CD4-positive, alpha-beta T cell (primary cell): ENCODE measurements at regions of chr14 and their contacts with region 1.

Region 1: DNA sequence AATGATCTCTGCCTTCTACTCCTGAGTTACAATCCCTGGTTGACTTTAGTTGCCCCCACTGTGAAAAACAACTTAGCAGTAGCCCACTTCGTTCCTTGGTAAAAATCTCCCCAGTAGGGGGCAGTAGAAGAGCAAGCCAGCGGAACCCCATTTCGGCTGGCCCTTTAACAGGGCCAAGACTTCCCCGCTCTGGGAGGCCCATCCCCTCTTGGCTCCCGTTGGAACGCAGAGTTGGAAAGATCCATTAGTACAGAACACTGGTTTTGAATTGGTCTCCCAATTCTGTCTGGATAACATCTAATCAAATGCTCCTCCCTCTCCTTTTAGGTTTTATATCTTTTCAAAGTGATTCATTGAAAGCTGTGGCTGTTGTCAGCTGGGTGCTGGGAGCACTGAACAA is 1133.3 kb downstream of the BCL11B start:
- DNase-seq: peak; percentile 48 to 88 (median 64)
- ATAC-seq: peak; percentile 47
- H3K4me3 ChIP-seq: peak overlapping the region; percentile 41
- H3K4me3 Mint-ChIP-seq: peak overlapping the region; percentile 80
- H3K27ac ChIP-seq: peak overlapping the region; percentile 56 to 71
- H3K27ac Mint-ChIP-seq: peak overlapping the region; percentile 92
- H3K4me1 ChIP-seq: peaks cover 65% of the 10 kb centered on the region
- H3K4me1 Mint-ChIP-seq: peaks cover 99% of the 10 kb centered on the region
- H3K27me3 ChIP-seq: no peaks in the 10 kb centered on the region
- H3K27me3 Mint-ChIP-seq: no peaks in the 10 kb centered on the region
- CTCF ChIP-seq: peak; percentile 94

Region 2: DNA sequence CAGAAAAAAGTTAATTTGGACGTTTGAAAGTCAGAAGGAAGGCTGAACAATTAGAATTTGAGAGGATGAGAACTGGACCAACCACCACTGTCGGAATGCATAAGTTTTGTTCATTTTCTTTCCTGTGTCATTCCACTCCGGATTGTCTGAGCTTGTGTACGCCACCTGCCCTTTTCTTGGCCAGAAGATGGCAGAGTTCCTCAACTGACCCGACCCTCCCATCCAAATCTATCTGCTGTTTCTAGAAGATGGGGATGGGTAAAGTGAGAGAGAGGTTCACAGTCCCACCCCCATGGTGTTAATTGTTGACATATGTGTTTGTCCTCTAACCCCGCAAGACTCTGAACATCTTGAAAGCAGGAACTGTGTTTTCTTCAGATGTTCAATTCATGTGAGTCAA is 953.5 kb before region 1 on chr14:
- CTCF ChIA-PET with region 1: interaction called, 3 read pairs
- POLR2A ChIA-PET with region 1: no interaction called
- intact Hi-C with region 1: loop called in 1 of 2 experiments (anchors 10 kb)
- DNase-seq: peak in 9 of 14 experiments; percentile 8 to 60 (median 24)
- ATAC-seq: no peak
- H3K4me3 ChIP-seq: no peak overlapping the region
- H3K4me3 Mint-ChIP-seq: no peak overlapping the region
- H3K27ac ChIP-seq: no peak overlapping the region
- H3K27ac Mint-ChIP-seq: no peak overlapping the region
- H3K4me1 ChIP-seq: peaks cover 5% of the 10 kb centered on the region
- H3K4me1 Mint-ChIP-seq: peaks cover 7% of the 10 kb centered on the region
- H3K27me3 ChIP-seq: no peaks in the 10 kb centered on the region
- H3K27me3 Mint-ChIP-seq: no peaks in the 10 kb centered on the region
- CTCF ChIP-seq: peak; percentile 54

Region 3: GRCh38 chr14:97523697-97524315 is 614.9 kb before region 1 on chr14:
- CTCF ChIA-PET with region 1: no interaction called
- POLR2A ChIA-PET with region 1: no interaction called
- intact Hi-C with region 1: no loop called
- DNase-seq: no peak
- ATAC-seq: no peak
- H3K4me3 ChIP-seq: no peak overlapping the region
- H3K4me3 Mint-ChIP-seq: no peak overlapping the region
- H3K27ac ChIP-seq: no peak overlapping the region
- H3K27ac Mint-ChIP-seq: no peak overlapping the region
- H3K4me1 ChIP-seq: peaks cover 6% of the 10 kb centered on the region
- H3K4me1 Mint-ChIP-seq: peaks cover 8% of the 10 kb centered on the region
- H3K27me3 ChIP-seq: no peaks in the 10 kb centered on the region
- H3K27me3 Mint-ChIP-seq: no peaks in the 10 kb centered on the region
- CTCF ChIP-seq: no peak

Region 4: DNA sequence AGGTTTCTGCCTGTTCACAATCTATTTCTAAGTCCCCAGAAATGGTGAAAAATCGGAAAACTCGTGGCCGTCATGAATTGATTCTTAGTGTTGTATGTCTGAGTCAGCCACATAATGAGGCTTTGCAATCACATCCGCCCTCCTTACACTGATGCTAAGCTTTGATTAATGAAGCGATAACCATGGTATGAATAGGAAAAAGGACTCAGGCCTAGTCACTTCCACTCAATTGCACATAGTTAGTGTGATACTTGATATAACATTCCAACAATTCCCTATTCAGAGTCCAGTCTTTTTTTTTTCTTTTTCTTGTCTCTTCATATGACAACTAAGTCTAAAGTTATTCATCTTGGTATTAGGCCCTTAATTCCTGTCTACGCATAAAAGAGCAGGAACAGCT is 110.5 kb before region 1 on chr14:
- CTCF ChIA-PET with region 1: no interaction called
- POLR2A ChIA-PET with region 1: no interaction called
- intact Hi-C with region 1: no loop called
- DNase-seq: no peak
- ATAC-seq: no peak
- H3K4me3 ChIP-seq: no peak overlapping the region
- H3K4me3 Mint-ChIP-seq: no peak overlapping the region
- H3K27ac ChIP-seq: no peak overlapping the region
- H3K27ac Mint-ChIP-seq: no peak overlapping the region
- H3K4me1 ChIP-seq: no peaks in the 10 kb centered on the region
- H3K4me1 Mint-ChIP-seq: no peaks in the 10 kb centered on the region
- H3K27me3 ChIP-seq: no peaks in the 10 kb centered on the region
- H3K27me3 Mint-ChIP-seq: no peaks in the 10 kb centered on the region
- CTCF ChIP-seq: no peak

Region 5: GRCh38 chr14:98161356-98161755 is 22.7 kb after region 1 on chr14:
- CTCF ChIA-PET with region 1: no interaction called
- POLR2A ChIA-PET with region 1: interaction called, 183 read pairs
- intact Hi-C with region 1: no loop called
- DNase-seq: no peak
- ATAC-seq: no peak
- H3K4me3 ChIP-seq: no peak overlapping the region
- H3K4me3 Mint-ChIP-seq: no peak overlapping the region
- H3K27ac ChIP-seq: no peak overlapping the region
- H3K27ac Mint-ChIP-seq: peak overlapping the region; percentile 15
- H3K4me1 ChIP-seq: peaks cover 19% of the 10 kb centered on the region
- H3K4me1 Mint-ChIP-seq: peaks cover 80% of the 10 kb centered on the region
- H3K27me3 ChIP-seq: no peaks in the 10 kb centered on the region
- H3K27me3 Mint-ChIP-seq: no peaks in the 10 kb centered on the region
- CTCF ChIP-seq: no peak

Region 6: GRCh38 chr14:98182393-98183055 is 43.9 kb after region 1 on chr14:
- CTCF ChIA-PET with region 1: interaction called, 7 read pairs
- POLR2A ChIA-PET with region 1: interaction called, 324 read pairs
- intact Hi-C with region 1: loop called in 1 of 2 experiments (anchors 5 kb)
- DNase-seq: peak in 2 of 14 experiments; percentile 57 to 58
- ATAC-seq: no peak
- H3K4me3 ChIP-seq: no peak overlapping the region
- H3K4me3 Mint-ChIP-seq: peak overlapping the region; percentile 75
- H3K27ac ChIP-seq: peak overlapping the region; percentile 69 to 87
- H3K27ac Mint-ChIP-seq: peak overlapping the region; percentile 93
- H3K4me1 ChIP-seq: peaks cover 86% of the 10 kb centered on the region
- H3K4me1 Mint-ChIP-seq: peaks cover 98% of the 10 kb centered on the region
- H3K27me3 ChIP-seq: no peaks in the 10 kb centered on the region
- H3K27me3 Mint-ChIP-seq: no peaks in the 10 kb centered on the region
- CTCF ChIP-seq: no peak

Region 7: GRCh38 chr14:98444077-98444476 is 305.4 kb after region 1 on chr14:
- CTCF ChIA-PET with region 1: no interaction called
- POLR2A ChIA-PET with region 1: interaction called, 5 read pairs
- intact Hi-C with region 1: loop called (anchors 2 to 10 kb)
- DNase-seq: peak; percentile 27 to 82 (median 48)
- ATAC-seq: peak; percentile 97
- H3K4me3 ChIP-seq: no peak overlapping the region
- H3K4me3 Mint-ChIP-seq: peak overlapping the region; percentile 79
- H3K27ac ChIP-seq: peak overlapping the region; percentile 75 to 81
- H3K27ac Mint-ChIP-seq: no peak overlapping the region
- H3K4me1 ChIP-seq: peaks cover 28% of the 10 kb centered on the region
- H3K4me1 Mint-ChIP-seq: peaks cover 57% of the 10 kb centered on the region
- H3K27me3 ChIP-seq: no peaks in the 10 kb centered on the region
- H3K27me3 Mint-ChIP-seq: no peaks in the 10 kb centered on the region
- CTCF ChIP-seq: no peak

Region 8: DNA sequence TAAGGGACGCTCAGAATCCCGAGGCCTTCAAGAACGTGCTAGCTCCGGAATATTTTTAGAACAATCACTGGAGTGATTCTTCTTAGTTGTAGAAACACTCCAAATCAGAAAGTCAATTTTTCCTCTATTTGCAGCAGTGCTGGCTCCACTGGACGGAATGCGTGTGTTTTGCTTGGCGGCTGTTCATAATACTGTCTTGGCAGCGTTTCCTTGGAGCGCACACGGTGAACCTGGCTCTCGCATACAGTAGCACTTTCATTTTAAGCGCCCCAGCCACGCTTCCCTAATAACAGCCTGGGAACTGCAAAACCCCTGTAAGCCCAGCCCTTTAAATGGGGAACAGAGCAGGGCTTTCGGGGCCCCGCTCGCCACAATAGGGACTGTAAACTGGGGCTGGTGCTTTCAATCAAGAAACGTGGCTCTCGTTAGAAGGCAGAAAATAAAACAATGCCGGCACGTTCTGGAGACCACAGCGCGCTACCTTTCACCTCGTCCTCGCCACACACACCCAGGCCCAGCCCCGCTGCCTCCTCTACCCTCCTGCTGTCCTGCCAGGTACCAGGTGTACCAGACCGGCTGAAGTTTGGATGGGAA is 1053.5 kb after region 1 on chr14:
- CTCF ChIA-PET with region 1: no interaction called
- POLR2A ChIA-PET with region 1: interaction called, 11 read pairs
- intact Hi-C with region 1: loop called in 1 of 2 experiments (anchors 5 kb)
- DNase-seq: peak in 5 of 14 experiments; percentile 40 to 72 (median 64)
- ATAC-seq: peak; percentile 40
- H3K4me3 ChIP-seq: peak overlapping the region; percentile 59
- H3K4me3 Mint-ChIP-seq: peak overlapping the region; percentile 89
- H3K27ac ChIP-seq: peak overlapping the region; percentile 77 to 81
- H3K27ac Mint-ChIP-seq: peak overlapping the region; percentile 95
- H3K4me1 ChIP-seq: peaks cover 99% of the 10 kb centered on the region
- H3K4me1 Mint-ChIP-seq: peaks cover 97% of the 10 kb centered on the region
- H3K27me3 ChIP-seq: no peaks in the 10 kb centered on the region
- H3K27me3 Mint-ChIP-seq: no peaks in the 10 kb centered on the region
- CTCF ChIP-seq: no peak